Right ventricle myocardium superior (tissue), 1 donor: ENCODE measurements at regions of chr14 and their contacts with region 1.

Region 1: GRCh38 chr14:105490572-105491366 is at the start of gene TEDC1:
- DNase-seq: peak; percentile 100
- ATAC-seq: peak; percentile 75
- total RNA-seq, gene TEDC1: 6.2 TPM

Region 2: DNA sequence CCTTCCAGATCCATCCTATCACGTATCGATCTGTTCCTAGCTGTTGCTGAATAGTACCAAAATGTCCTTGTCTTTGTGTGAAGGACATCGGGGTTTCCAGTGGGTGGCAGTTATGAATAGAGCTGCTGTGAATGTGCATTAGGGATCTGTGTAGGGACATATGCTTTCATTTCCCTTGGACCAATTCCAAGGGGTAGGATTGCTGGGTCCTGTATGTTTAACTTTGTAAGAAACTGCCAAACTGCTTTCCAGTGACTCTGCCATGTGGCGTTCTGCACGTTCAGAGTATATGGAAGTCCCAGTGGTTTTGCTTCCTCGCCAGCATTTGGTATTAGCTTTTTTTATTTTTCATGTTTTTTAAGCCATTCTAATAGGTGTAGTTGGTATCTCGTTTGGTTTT is 147.6 kb before region 1 on chr14:
- intact Hi-C with region 1: no loop called
- DNase-seq: no peak
- ATAC-seq: no peak

Region 3: DNA sequence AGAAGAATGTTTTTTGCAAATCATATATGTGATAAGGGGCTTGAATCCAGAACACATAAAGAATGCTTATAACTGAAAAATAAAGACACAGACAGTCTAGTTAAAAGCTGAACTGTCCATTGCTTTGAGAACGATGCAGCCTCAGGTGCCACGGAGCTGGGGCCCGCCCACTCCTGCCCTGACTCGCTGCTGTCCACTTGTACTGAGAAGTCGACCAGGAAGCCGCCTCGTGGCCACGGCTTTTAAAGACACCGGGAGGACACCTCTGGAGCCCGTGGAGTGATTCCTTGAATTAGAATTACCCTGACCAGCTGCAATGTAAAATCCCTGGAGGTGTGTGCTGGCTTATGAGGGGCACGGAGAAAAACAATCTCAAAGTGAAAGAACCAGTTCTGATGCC is 116.4 kb before region 1 on chr14:
- intact Hi-C with region 1: loop called (anchors 2 kb)
- DNase-seq: no peak
- ATAC-seq: no peak

Region 4: DNA sequence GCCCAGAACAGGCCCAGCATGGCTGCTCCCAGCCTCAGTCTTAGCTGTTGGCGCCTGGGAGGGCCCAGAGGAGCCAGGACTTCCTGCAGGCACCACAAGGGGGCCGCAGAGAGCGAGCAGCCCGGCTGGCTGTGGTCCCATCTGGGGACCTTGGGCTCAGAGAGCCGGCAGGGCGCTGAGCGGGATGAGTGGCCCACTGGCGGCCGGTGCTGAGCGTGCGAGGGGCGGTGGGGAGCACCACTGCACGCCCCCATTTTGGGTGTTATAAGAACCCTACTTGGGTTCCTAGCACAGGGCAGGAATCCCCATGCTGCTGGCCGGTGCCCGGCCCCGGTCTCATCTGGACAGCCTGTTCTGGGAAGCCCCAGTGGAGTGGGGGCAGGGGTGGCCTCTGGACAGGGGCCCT is 42.1 kb before region 1 on chr14:
- intact Hi-C with region 1: loop called (anchors 5 kb)
- DNase-seq: peak; percentile 87
- ATAC-seq: peak; percentile 93